Activated CD4-positive, alpha-beta T cell treated with anti-CD3 and anti-CD28 coated beads, Interleukin-2, amount 10 ng/mL, durations not matched to agents 24 days and 14 days (primary cell): ENCODE measurements at regions of chr20 and their contacts with region 1.

Region 1: GRCh38 chr20:18287915-18288748 is at the start of gene ZNF133:
- DNase-seq: peak; percentile 99
- H3K4me3 Mint-ChIP-seq: peak within 1 kb of the TSS; percentile 99
- H3K27ac Mint-ChIP-seq: peak within 1 kb of the TSS; percentile 99
- H3K4me1 Mint-ChIP-seq: peaks cover 22% of the 10 kb centered on the region
- H3K27me3 Mint-ChIP-seq: peaks cover 17% of the 10 kb centered on the region
- total RNA-seq, gene ZNF133: 10.2 and 10.5 TPM in 2 replicates

Region 2: DNA sequence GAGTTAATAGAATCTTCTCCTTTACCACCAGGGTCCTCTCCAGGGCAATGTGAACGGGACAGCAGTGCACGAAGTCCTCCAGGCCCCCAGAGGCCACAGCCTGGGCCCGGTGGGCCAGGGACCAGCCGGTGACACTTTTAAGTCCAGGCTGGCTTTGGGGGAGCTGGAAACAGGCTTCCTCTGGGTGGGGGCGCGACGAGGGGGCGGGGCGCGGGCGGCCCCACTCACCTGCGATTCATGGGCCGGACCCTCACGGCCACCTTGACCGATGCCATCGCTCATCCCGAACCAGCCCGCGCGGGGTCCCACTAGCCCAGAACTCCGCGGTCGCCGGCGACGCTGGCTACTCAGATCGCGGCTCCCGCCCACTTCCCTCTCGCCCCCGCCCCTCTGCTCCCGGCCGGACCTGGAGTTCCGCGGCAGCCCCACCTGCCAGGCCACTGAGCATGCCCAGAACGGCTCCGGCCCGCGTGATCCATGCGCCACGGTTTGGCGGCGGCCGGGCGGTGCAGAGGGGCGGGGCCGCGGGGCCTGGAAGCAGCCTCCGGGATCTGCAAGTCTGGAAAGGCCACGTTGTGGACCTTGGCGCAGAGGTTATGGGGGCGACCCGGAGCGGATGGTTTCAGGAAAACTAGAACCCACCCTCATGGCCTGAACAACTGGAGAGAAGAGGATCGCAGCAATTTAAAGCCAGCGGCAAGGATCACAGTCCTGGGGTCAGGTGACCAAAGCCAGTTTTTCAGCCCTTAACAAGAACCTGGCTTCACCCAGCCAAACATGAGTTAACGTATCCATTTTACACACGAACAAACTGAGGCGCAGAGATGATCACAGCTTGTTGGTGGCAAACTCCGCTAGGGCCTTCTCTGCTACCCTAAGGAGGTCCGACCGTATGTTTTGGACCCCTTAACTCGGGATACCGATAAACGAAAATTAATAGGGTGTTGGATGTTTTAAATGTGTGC is 1714.8 kb before region 1 on chr20 and contains the start of gene KIF16B:
- intact Hi-C with region 1: loop called (anchors 2 kb)
- DNase-seq: peak; percentile 97
- H3K4me3 Mint-ChIP-seq: peak within 1 kb of the TSS; percentile 89
- H3K27ac Mint-ChIP-seq: peak within 1 kb of the TSS; percentile 88
- H3K4me1 Mint-ChIP-seq: peaks cover 34% of the 10 kb centered on the region
- H3K27me3 Mint-ChIP-seq: no peaks in the 10 kb centered on the region
- total RNA-seq, gene KIF16B: 7.5 and 8.1 TPM in 2 replicates

Region 3: GRCh38 chr20:17504898-17505635 is 783.1 kb before region 1 on chr20:
- intact Hi-C with region 1: loop called (anchors 5 kb)
- DNase-seq: peak; percentile 90
- H3K4me3 Mint-ChIP-seq: peak overlapping the region; percentile 88
- H3K27ac Mint-ChIP-seq: peak overlapping the region; percentile 92
- H3K4me1 Mint-ChIP-seq: peaks cover 47% of the 10 kb centered on the region
- H3K27me3 Mint-ChIP-seq: peaks cover 4% of the 10 kb centered on the region

Region 4: GRCh38 chr20:18137412-18138265 is 150.5 kb before region 1 on chr20 and contains the starts of genes KAT14 and PET117:
- intact Hi-C with region 1: loop called (anchors 1 kb)
- DNase-seq: peak; percentile 98
- H3K4me3 Mint-ChIP-seq: peak within 1 kb of the TSS; percentile 75
- H3K27ac Mint-ChIP-seq: peak within 1 kb of the TSS; percentile 89
- H3K4me1 Mint-ChIP-seq: peaks cover 26% of the 10 kb centered on the region
- H3K27me3 Mint-ChIP-seq: peaks cover 3% of the 10 kb centered on the region
- total RNA-seq, gene KAT14: 16.5 and 16.8 TPM in 2 replicates
- total RNA-seq, gene PET117: 18.5 and 19.5 TPM in 2 replicates

Region 5: GRCh38 chr20:18507218-18508021 is 219.3 kb after region 1 on chr20 and contains the start of gene SEC23B:
- intact Hi-C with region 1: loop called (anchors 1 kb)
- DNase-seq: peak; percentile 99
- H3K4me3 Mint-ChIP-seq: peak within 1 kb of the TSS; percentile 99
- H3K27ac Mint-ChIP-seq: peak within 1 kb of the TSS; percentile 99
- H3K4me1 Mint-ChIP-seq: peaks cover 33% of the 10 kb centered on the region
- H3K27me3 Mint-ChIP-seq: peaks cover 3% of the 10 kb centered on the region
- total RNA-seq, gene SEC23B: 108 TPM in 2 replicates

Region 6: DNA sequence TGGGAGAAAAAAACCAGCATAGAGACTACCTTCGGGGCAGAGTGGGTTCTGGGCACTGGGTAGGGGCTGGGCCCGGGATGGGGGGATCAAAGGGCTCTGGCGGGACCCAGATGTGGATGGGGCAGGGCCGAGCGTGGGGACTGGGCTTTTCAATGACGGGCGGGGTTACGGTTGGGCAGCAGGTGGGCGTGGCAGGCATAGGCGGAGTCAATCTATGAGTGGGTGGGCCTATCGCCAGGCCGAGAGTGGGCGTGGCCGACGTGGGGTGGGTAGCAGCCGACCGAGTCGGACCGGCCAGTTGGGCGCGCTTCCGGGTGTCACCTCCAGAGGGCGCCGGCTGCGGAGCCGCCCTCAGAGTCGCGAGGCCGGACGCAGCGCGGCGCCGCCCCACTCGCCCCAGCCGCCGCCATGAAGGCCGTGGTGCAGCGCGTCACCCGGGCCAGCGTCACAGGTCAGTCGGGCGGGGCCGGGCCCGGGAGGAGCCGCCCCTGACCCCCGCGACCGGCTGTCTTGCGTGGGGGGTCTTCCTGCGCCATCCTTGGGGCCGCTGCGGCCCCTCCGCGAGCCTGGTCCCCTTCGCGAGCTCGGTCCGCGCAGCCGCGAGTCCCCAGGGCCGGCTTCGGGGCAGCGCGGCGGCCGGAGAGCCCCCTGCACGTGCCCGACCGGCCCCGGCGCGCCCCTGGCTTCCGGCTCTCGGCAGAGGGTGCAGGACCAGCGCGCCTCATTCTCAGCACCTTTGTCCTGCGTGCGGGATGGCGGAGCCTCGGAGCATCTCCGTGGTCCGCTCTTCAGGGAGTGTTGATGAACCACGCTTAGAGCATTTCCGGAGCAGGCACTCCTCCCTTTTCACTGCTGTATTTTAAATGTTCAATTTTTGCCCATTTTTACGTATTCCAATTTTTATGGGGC is 299.8 kb after region 1 on chr20 and contains the start of gene DTD1:
- intact Hi-C with region 1: loop called (anchors 5 kb)
- DNase-seq: peak; percentile 96
- H3K4me3 Mint-ChIP-seq: peak within 1 kb of the TSS; percentile 94
- H3K27ac Mint-ChIP-seq: peak within 1 kb of the TSS; percentile 88
- H3K4me1 Mint-ChIP-seq: peaks cover 25% of the 10 kb centered on the region
- H3K27me3 Mint-ChIP-seq: peaks cover 7% of the 10 kb centered on the region
- total RNA-seq, gene DTD1: 49.2 and 49.9 TPM in 2 replicates